H1 (cell line): ENCODE measurements at regions of chr19 and their contacts with region 1.

Region 1: GRCh38 chr19:45779231-45780145 is 2.8 kb downstream of the DMPK start:
- DNase-seq: peak; percentile 77 to 100
- H3K4me3 ChIP-seq: peak overlapping the region; percentile 19 to 60 (median 38); a peak in 7 of 8 replicates
- H3K27ac ChIP-seq: no peak overlapping the region
- H3K4me1 ChIP-seq: peaks cover 3 to 26% (median 15%) of the 10 kb centered on the region in 4 experiments
- H3K27me3 ChIP-seq: peaks cover 0 to 6% (median 0%) of the 10 kb centered on the region in 4 experiments; a peak in 1 of 7 replicates
- CTCF ChIP-seq: peak; percentile 81 to 87 (median 86)
- EP300 ChIP-seq: no peak
- POLR2A ChIP-seq: no peak
- RAD21 ChIP-seq: peak; percentile 45 to 52; a peak in 3 of 4 replicates

Region 2: GRCh38 chr19:45792470-45793177 is 13.1 kb after region 1 on chr19 and contains the start of gene DMWD:
- CTCF ChIA-PET with region 1: interaction called, 12 read pairs
- POLR2A ChIA-PET with region 1: interaction called, 39 read pairs
- DNase-seq: peak; percentile 97 to 100
- H3K4me3 ChIP-seq: peak within 1 kb of the TSS; percentile 67 to 100 (median 86)
- H3K27ac ChIP-seq: peak within 1 kb of the TSS; percentile 83; the same call in 1 of the 2 replicates
- H3K4me1 ChIP-seq: peaks cover 0 to 6% (median 4%) of the 10 kb centered on the region in 4 experiments; a peak in 3 of 7 replicates
- H3K27me3 ChIP-seq: no peaks in the 10 kb centered on the region
- CTCF ChIP-seq: no peak
- EP300 ChIP-seq: no peak
- POLR2A ChIP-seq: peak in 1 of 2 experiments; percentile 80; a peak in 1 of 3 replicates
- RAD21 ChIP-seq: no peak
- total RNA-seq, gene DMWD: 41.0 and 41.6 TPM in 2 replicates